ENCODE measurements at regions of chr3 and their contacts with region 1.

Region 1: GRCh38 chr3:177893321-177893720 is 642.9 kb upstream of the KCNMB2 start:
- DNase-seq: peak; percentile 35
- H3K4me3 ChIP-seq: no peak overlapping the region
- H3K27ac ChIP-seq: peak overlapping the region; percentile 66
- H3K4me1 ChIP-seq: peaks cover 21% of the 10 kb centered on the region
- H3K27me3 ChIP-seq: no peaks in the 10 kb centered on the region
- CTCF ChIP-seq: peak; percentile 16 to 28
- POLR2A ChIP-seq: no peak

Region 2: GRCh38 chr3:177694316-177694715 is 199.0 kb before region 1 on chr3:
- CTCF ChIA-PET with region 1: no interaction called
- POLR2A ChIA-PET with region 1: no interaction called
- dilution Hi-C with region 1: no loop called
- intact Hi-C with region 1: loop called (anchors 5 kb)
- DNase-seq: peak; percentile 95
- H3K4me3 ChIP-seq: peak overlapping the region in 1 of 3 experiments; percentile 5
- H3K27ac ChIP-seq: peak overlapping the region; percentile 43
- H3K4me1 ChIP-seq: peaks cover 18% of the 10 kb centered on the region
- H3K27me3 ChIP-seq: no peaks in the 10 kb centered on the region
- CTCF ChIP-seq: no peak
- POLR2A ChIP-seq: no peak

Region 3: DNA sequence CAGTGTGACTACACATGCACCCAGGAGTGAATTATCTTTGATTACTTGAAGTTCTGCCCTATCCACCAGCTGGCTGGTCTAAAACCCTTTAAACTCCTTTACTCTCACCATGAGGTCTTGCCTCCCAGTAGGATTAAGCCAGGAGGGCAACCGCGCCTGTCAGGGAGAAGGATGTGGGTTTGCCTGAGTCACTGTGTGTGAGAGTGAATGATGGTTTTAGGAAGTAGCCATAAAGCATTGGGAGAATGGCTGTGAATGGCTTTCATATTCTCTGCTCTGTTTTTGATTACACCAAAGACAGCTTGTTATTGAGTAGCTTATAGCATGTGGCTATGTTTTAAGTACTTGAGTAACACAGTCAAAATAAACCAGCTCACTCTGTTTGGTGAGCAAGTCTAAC is 58.3 kb before region 1 on chr3:
- CTCF ChIA-PET with region 1: interaction called, 4 read pairs
- POLR2A ChIA-PET with region 1: no interaction called
- dilution Hi-C with region 1: no loop called
- intact Hi-C with region 1: loop called (anchors 2 kb)
- DNase-seq: peak; percentile 88
- H3K4me3 ChIP-seq: no peak overlapping the region
- H3K27ac ChIP-seq: no peak overlapping the region
- H3K4me1 ChIP-seq: peaks cover 5% of the 10 kb centered on the region
- H3K27me3 ChIP-seq: no peaks in the 10 kb centered on the region
- CTCF ChIP-seq: no peak
- POLR2A ChIP-seq: no peak

Region 4: GRCh38 chr3:177906126-177906511 is 12.8 kb after region 1 on chr3:
- CTCF ChIA-PET with region 1: no interaction called
- POLR2A ChIA-PET with region 1: no interaction called
- dilution Hi-C with region 1: no loop called
- intact Hi-C with region 1: no loop called
- DNase-seq: peak; percentile 12
- H3K4me3 ChIP-seq: no peak overlapping the region
- H3K27ac ChIP-seq: no peak overlapping the region
- H3K4me1 ChIP-seq: no peaks in the 10 kb centered on the region
- H3K27me3 ChIP-seq: no peaks in the 10 kb centered on the region
- CTCF ChIP-seq: no peak
- POLR2A ChIP-seq: no peak

Region 5: GRCh38 chr3:178078953-178079352 is 185.6 kb after region 1 on chr3:
- CTCF ChIA-PET with region 1: no interaction called
- POLR2A ChIA-PET with region 1: no interaction called
- dilution Hi-C with region 1: no loop called
- intact Hi-C with region 1: loop called (anchors 1 kb)
- DNase-seq: peak; percentile 99
- H3K4me3 ChIP-seq: no peak overlapping the region
- H3K27ac ChIP-seq: peak overlapping the region; percentile 81
- H3K4me1 ChIP-seq: peaks cover 26% of the 10 kb centered on the region
- H3K27me3 ChIP-seq: no peaks in the 10 kb centered on the region
- CTCF ChIP-seq: no peak
- POLR2A ChIP-seq: no peak

Region 6: DNA sequence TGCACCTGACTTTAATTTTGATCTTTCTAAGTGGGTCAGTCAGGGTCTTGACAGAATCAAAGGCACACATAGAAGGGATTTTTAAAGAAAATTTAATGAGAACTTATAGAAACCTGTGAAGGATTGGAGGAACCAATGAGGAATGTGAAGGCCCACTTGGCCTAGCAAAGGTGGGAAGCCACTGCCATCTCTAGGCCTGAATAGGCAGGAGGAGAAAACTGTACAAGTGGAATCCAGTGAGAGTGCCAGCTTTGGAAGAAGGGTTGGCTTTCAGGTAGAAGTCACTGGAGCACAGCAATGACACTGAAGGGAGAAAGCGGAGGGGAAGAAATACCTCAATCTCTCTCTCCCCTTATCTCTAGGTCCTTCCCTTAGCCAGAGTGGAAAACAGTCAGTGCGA is 262.2 kb after region 1 on chr3:
- CTCF ChIA-PET with region 1: no interaction called
- POLR2A ChIA-PET with region 1: no interaction called
- dilution Hi-C with region 1: no loop called
- intact Hi-C with region 1: loop called (anchors 5 kb)
- DNase-seq: no peak
- H3K4me3 ChIP-seq: no peak overlapping the region
- H3K27ac ChIP-seq: no peak overlapping the region
- H3K4me1 ChIP-seq: peaks cover 20% of the 10 kb centered on the region
- H3K27me3 ChIP-seq: no peaks in the 10 kb centered on the region
- CTCF ChIP-seq: no peak
- POLR2A ChIP-seq: no peak

Region 7: GRCh38 chr3:178325330-178325729 is 432.0 kb after region 1 on chr3:
- CTCF ChIA-PET with region 1: no interaction called
- POLR2A ChIA-PET with region 1: no interaction called
- dilution Hi-C with region 1: no loop called
- intact Hi-C with region 1: loop called (anchors 1 kb)
- DNase-seq: peak; percentile 76
- H3K4me3 ChIP-seq: no peak overlapping the region
- H3K27ac ChIP-seq: peak overlapping the region; percentile 2
- H3K4me1 ChIP-seq: peaks cover 13% of the 10 kb centered on the region
- H3K27me3 ChIP-seq: no peaks in the 10 kb centered on the region
- CTCF ChIP-seq: peak in 1 of 2 donors; percentile 15
- POLR2A ChIP-seq: no peak

Measured in endothelial cell of umbilical vein (primary cell).